ENCODE measurements at regions of chr1 and their contacts with region 1.

Region 1: GRCh38 chr1:36864182-36864822 is 170.0 kb downstream of the GRIK3 start:
- DNase-seq: peak; percentile 80
- ATAC-seq: peak; percentile 71
- H3K4me3 Mint-ChIP-seq: no peak overlapping the region
- H3K27ac Mint-ChIP-seq: no peak overlapping the region
- H3K4me1 Mint-ChIP-seq: no peaks in the 10 kb centered on the region; the same call in 1 of the 2 replicates
- H3K27me3 Mint-ChIP-seq: no peaks in the 10 kb centered on the region; the same call in 1 of the 2 replicates
- CTCF ChIP-seq: peak; percentile 96

Region 2: GRCh38 chr1:36693161-36693525 is 171.2 kb before region 1 on chr1:
- CTCF ChIA-PET with region 1: no interaction called
- POLR2A ChIA-PET with region 1: no interaction called
- DNase-seq: no peak
- ATAC-seq: no peak
- H3K4me3 Mint-ChIP-seq: no peak overlapping the region
- H3K27ac Mint-ChIP-seq: no peak overlapping the region
- H3K4me1 Mint-ChIP-seq: no peaks in the 10 kb centered on the region
- H3K27me3 Mint-ChIP-seq: peaks cover 6% of the 10 kb centered on the region; the same call in 1 of the 2 replicates
- CTCF ChIP-seq: no peak

Region 3: GRCh38 chr1:36709869-36710481 is 154.3 kb before region 1 on chr1:
- CTCF ChIA-PET with region 1: interaction called, 13 read pairs
- POLR2A ChIA-PET with region 1: no interaction called
- DNase-seq: no peak
- ATAC-seq: no peak
- H3K4me3 Mint-ChIP-seq: no peak overlapping the region
- H3K27ac Mint-ChIP-seq: no peak overlapping the region
- H3K4me1 Mint-ChIP-seq: peaks cover 21% of the 10 kb centered on the region
- H3K27me3 Mint-ChIP-seq: peaks cover 3% of the 10 kb centered on the region; the same call in 1 of the 2 replicates
- CTCF ChIP-seq: no peak

Region 4: DNA sequence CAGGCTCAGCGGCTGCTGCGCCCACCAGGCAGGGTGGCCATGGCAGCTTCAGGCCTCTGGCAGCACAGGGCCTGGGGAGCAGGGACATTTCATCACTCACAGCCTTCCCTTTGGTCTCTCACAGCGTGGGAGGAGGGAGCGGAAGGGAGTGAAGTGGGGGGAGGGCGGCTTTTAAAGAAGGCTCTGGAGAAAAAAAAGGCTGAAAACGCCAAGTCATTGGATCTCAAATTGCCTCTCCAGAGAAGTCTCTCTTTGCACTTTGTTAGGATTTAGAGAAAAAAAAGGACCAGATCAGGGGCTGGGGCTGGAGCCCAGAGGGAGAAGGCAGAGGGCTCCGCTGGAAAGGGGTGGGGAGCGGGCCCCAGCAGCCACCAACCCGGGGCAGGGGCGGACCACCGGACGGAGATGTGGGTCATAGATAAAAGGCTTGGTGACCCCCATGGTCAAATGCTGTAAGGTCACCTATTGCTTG is 39.9 kb before region 1 on chr1:
- CTCF ChIA-PET with region 1: interaction called, 14 read pairs
- POLR2A ChIA-PET with region 1: no interaction called
- DNase-seq: peak; percentile 32
- ATAC-seq: peak; percentile 77
- H3K4me3 Mint-ChIP-seq: peak overlapping the region; percentile 24; the same call in 1 of the 2 replicates
- H3K27ac Mint-ChIP-seq: peak overlapping the region; percentile 83
- H3K4me1 Mint-ChIP-seq: peaks cover 29% of the 10 kb centered on the region
- H3K27me3 Mint-ChIP-seq: peaks cover 4% of the 10 kb centered on the region; the same call in 1 of the 2 replicates
- CTCF ChIP-seq: no peak

Region 5: GRCh38 chr1:36846357-36846756 is 17.9 kb before region 1 on chr1:
- CTCF ChIA-PET with region 1: interaction called, 125 read pairs
- POLR2A ChIA-PET with region 1: interaction called, 3 read pairs
- DNase-seq: peak; percentile 39
- ATAC-seq: no peak
- H3K4me3 Mint-ChIP-seq: no peak overlapping the region
- H3K27ac Mint-ChIP-seq: no peak overlapping the region
- H3K4me1 Mint-ChIP-seq: peaks cover 65% of the 10 kb centered on the region
- H3K27me3 Mint-ChIP-seq: no peaks in the 10 kb centered on the region
- CTCF ChIP-seq: no peak

Region 6: GRCh38 chr1:36874271-36875060 is 10.2 kb after region 1 on chr1:
- CTCF ChIA-PET with region 1: interaction called, 21 read pairs
- POLR2A ChIA-PET with region 1: no interaction called
- DNase-seq: no peak
- ATAC-seq: no peak
- H3K4me3 Mint-ChIP-seq: no peak overlapping the region
- H3K27ac Mint-ChIP-seq: no peak overlapping the region; the same call in 1 of the 2 replicates
- H3K4me1 Mint-ChIP-seq: peaks cover 3% of the 10 kb centered on the region; the same call in 1 of the 2 replicates
- H3K27me3 Mint-ChIP-seq: no peaks in the 10 kb centered on the region; the same call in 1 of the 2 replicates
- CTCF ChIP-seq: no peak

Region 7: DNA sequence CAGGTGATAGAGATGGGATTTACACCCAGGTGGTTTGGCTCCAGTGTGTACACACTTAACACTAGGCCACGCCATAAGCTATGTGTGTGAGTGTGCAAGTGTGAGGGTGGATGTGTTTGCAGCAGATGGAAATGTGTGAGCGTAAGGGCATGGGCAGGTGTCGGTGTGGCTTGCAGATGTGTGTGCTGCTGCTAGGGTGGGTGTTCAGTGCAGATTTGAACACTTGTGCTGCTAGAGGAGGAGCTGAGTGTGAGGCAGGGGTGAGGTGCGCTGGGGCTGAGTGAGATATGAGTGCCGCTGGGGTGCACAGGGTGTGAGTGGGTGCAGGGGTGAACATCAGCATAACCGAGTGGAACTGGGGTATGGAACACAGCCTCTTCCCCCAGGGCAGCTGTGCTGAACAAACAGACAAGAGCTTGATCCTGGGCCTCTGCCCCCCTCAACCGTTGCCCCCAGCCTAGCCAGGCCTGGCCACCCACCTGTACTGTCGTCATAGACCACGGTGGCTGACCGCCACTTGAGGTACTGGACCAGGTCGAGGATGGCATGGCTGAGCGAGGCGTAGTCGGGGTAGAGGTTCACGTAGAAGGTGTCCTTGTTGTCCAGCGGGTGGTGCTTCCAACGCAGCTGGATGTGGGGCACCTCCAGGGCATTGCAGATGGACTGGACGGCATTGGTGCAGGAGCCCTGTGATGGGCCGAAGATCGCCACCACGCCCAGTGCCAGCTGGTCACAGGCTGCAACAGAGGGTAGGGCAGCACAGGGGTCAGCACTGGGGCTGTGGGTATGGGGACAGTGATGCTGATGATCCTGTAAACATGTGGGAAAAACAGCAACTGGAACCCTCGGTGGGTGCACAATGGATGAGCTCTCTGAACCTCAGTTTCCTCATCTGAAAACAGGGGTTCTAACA is 16.1 kb after region 1 on chr1:
- CTCF ChIA-PET with region 1: interaction called, 21 read pairs
- POLR2A ChIA-PET with region 1: no interaction called
- DNase-seq: no peak
- ATAC-seq: no peak
- H3K4me3 Mint-ChIP-seq: no peak overlapping the region
- H3K27ac Mint-ChIP-seq: no peak overlapping the region
- H3K4me1 Mint-ChIP-seq: no peaks in the 10 kb centered on the region
- H3K27me3 Mint-ChIP-seq: no peaks in the 10 kb centered on the region
- CTCF ChIP-seq: no peak

Measured in WTC11 (cell line).